ENCODE measurements at regions of chr10 and their contacts with region 1.

Region 1: GRCh38 chr10:124741281-124741921 is 2.8 kb downstream of the FAM53B start:
- DNase-seq: peak; percentile 77
- H3K4me3 ChIP-seq: peak overlapping the region; percentile 42 to 46 (median 44)
- H3K27ac ChIP-seq: peak overlapping the region; percentile 91
- H3K4me1 ChIP-seq: peaks cover 69% of the 10 kb centered on the region
- H3K27me3 ChIP-seq: no peaks in the 10 kb centered on the region
- CTCF ChIP-seq: peak; percentile 74 to 85

Region 2: DNA sequence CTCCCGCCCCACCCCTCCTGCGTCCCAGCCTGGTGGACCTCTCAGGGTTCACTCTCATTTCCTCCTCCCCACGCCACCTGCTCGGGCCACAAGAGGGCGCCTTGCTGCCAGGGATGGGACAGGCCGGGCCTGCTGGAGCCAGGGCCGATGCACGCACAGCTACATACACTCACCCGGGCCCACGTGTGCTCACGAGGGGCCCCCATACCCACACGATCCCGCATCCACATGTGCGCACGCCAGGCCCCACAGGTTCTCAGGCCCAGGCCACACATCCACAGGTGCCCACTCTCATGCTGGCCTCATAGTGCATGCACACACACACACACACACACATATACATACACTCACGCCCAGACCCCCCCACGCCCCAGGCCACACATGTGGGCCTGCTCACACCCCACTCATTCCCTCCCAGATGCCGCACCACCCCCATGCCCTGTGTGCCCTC is 211.2 kb before region 1 on chr10:
- CTCF ChIA-PET with region 1: interaction called, 10 read pairs
- dilution Hi-C with region 1: no loop called
- in situ Hi-C with region 1: loop called (anchors 10 kb)
- intact Hi-C with region 1: loop called (anchors 1 kb)
- DNase-seq: peak; percentile 66
- H3K4me3 ChIP-seq: no peak overlapping the region
- H3K27ac ChIP-seq: no peak overlapping the region
- H3K4me1 ChIP-seq: peaks cover 15% of the 10 kb centered on the region
- H3K27me3 ChIP-seq: no peaks in the 10 kb centered on the region
- CTCF ChIP-seq: peak; percentile 91 to 97

Region 3: DNA sequence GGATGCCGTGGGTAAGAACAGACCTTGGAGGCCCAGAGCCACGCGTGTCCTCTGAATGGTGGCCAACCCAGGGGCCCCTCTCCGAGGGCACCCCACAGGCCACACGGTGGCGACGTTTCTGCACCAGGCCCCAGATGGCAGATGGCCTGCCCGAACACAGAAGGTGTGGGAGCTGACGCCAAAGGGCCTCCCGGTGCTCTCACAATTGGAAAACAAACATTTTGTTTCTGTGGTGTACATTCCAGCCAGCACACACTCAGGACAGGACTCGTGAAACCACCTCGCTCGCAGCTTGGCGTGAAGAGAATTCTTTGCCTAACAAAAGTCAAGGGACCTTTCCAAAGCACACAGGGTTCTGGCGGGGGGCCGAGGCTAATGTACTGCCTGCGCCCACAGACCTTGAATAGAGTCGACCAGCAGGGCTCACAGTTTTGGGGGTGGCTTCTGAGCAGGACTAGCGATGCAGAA is 109.3 kb before region 1 on chr10:
- CTCF ChIA-PET with region 1: interaction called, 5 read pairs
- dilution Hi-C with region 1: no loop called
- in situ Hi-C with region 1: loop called in 1 of 2 experiments (anchors 25 kb)
- intact Hi-C with region 1: loop called (anchors 1 kb)
- DNase-seq: peak; percentile 82
- H3K4me3 ChIP-seq: peak overlapping the region in 1 of 3 experiments; percentile 19
- H3K27ac ChIP-seq: peak overlapping the region; percentile 78
- H3K4me1 ChIP-seq: peaks cover 33% of the 10 kb centered on the region
- H3K27me3 ChIP-seq: no peaks in the 10 kb centered on the region
- CTCF ChIP-seq: peak; percentile 43 to 79

Region 4: DNA sequence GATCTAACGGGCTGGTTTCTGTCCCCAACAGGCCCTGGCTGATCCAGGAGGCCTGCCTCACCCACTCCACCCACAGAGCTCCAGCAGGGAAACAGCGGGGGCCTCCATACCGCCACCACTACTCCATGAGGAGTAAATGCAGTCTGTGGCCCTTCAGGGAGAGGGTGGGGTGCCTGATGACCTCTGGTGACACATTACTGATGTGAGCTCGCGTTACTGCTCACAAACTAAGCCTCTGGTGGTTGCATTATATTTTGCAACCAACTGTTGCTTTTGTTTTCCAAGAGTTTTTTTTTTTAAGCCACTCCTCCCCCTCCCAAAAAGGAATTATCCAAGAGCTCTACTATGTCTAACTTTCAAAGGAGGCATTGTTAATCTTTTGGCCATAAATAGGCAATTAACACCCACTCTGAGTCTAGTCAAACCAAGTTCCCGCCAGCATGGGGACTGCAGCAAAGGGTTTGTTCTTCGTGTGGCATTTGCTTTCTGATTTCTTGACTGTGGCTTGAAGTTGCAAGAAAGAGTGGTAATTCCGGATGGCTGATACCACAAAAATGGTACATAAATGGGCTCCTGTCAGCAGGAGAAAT is 69.8 kb before region 1 on chr10:
- CTCF ChIA-PET with region 1: interaction called, 4 read pairs
- dilution Hi-C with region 1: no loop called
- in situ Hi-C with region 1: no loop called
- intact Hi-C with region 1: loop called (anchors 2 kb)
- DNase-seq: peak; percentile 72
- H3K4me3 ChIP-seq: no peak overlapping the region
- H3K27ac ChIP-seq: no peak overlapping the region
- H3K4me1 ChIP-seq: peaks cover 17% of the 10 kb centered on the region
- H3K27me3 ChIP-seq: no peaks in the 10 kb centered on the region
- CTCF ChIP-seq: peak; percentile 48 to 57

Region 5: GRCh38 chr10:124697830-124698544 is 43.4 kb before region 1 on chr10:
- CTCF ChIA-PET with region 1: no interaction called
- dilution Hi-C with region 1: no loop called
- in situ Hi-C with region 1: no loop called
- intact Hi-C with region 1: no loop called
- DNase-seq: no peak
- H3K4me3 ChIP-seq: no peak overlapping the region
- H3K27ac ChIP-seq: no peak overlapping the region
- H3K4me1 ChIP-seq: no peaks in the 10 kb centered on the region
- H3K27me3 ChIP-seq: no peaks in the 10 kb centered on the region
- CTCF ChIP-seq: no peak

Region 6: DNA sequence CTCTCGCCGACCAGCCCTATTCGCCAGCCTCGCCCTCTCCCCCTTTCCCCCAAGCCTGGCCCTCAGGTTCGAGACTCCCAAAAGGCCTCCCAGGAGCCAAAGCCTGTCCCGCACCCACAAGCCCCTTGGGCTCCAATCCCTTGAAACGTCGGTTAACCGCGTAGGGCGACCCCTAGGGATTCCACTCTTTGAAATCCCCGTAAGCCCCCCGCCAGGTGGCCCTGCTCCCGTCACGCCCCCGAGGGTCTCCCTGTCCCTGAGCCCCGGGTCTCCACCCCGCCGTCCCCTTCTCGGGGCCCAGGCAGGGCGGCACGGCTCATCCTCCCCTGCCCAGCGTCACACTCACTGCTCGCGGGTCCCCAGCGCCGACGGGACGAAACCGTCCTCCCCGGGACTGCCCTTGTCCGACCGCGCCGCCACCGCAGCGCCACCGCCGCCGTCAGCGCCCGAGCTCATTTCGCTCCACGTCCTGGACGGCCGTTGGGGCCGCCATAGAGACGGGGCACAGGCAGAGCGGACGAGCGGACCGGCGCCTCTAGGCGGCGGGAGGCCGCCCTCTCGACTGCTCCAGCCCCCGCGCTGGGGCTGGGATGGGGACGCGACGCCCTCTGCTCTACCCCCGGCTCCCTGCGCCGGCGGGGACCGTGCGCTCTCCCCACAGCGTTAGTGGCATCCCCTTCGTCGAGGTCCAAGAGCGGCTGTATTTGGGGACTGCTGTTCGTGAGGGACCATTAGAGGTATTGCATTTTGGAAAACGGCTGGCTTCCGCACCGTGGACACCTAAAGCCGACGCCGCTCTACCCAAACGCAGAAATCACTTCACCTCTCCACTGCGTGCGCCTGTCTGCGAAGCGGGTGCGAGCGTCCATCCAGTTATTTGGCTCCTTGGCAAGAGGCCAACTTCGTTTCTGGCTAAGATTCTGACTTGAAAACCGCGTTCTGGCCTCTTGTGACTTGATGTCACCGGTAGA is 50.3 kb after region 1 on chr10 and contains the start of gene EEF1AKMT2:
- CTCF ChIA-PET with region 1: no interaction called
- dilution Hi-C with region 1: no loop called
- in situ Hi-C with region 1: no loop called
- intact Hi-C with region 1: loop called (anchors 2 kb)
- DNase-seq: peak; percentile 82
- H3K4me3 ChIP-seq: peak within 1 kb of the TSS; percentile 94 to 97 (median 95)
- H3K27ac ChIP-seq: peak within 1 kb of the TSS; percentile 79
- H3K4me1 ChIP-seq: no peaks in the 10 kb centered on the region
- H3K27me3 ChIP-seq: no peaks in the 10 kb centered on the region
- CTCF ChIP-seq: peak in 1 of 2 donors; percentile 44
- total RNA-seq, gene EEF1AKMT2: 13.0 to 15.7 TPM